Heart right ventricle (tissue), 16 donors: ENCODE measurements at regions of chr1 and their contacts with region 1.

Region 1: GRCh38 chr1:205255941-205256780 is 28.4 kb downstream of the TMCC2 start:
- DNase-seq: peak; percentile 90 to 91
- ATAC-seq: peak; percentile 86 to 94 (median 92)
- H3K4me3 ChIP-seq: no peak overlapping the region
- H3K27ac ChIP-seq: peak overlapping the region in 4 of 10 donors; percentile 6 to 45 (median 15)
- H3K4me1 ChIP-seq: peaks cover 28 to 49% (median 40%) of the 10 kb centered on the region in 9 donors
- H3K27me3 ChIP-seq: no peaks in the 10 kb centered on the region
- CTCF ChIP-seq: peak; percentile 92 to 99 (median 95)

Region 2: GRCh38 chr1:204806943-204807687 is 449.0 kb before region 1 on chr1:
- intact Hi-C with region 1: loop called in 1 of 10 experiments (anchors 5 kb)
- DNase-seq: peak; percentile 80 to 85
- ATAC-seq: peak; percentile 93 to 98 (median 96)
- H3K4me3 ChIP-seq: peak overlapping the region in 9 of 10 donors; percentile 16 to 59 (median 51)
- H3K27ac ChIP-seq: no peak overlapping the region
- H3K4me1 ChIP-seq: peaks cover 0 to 13% (median 4%) of the 10 kb centered on the region in 9 donors
- H3K27me3 ChIP-seq: no peaks in the 10 kb centered on the region
- CTCF ChIP-seq: peak; percentile 86 to 99 (median 96)

Region 3: DNA sequence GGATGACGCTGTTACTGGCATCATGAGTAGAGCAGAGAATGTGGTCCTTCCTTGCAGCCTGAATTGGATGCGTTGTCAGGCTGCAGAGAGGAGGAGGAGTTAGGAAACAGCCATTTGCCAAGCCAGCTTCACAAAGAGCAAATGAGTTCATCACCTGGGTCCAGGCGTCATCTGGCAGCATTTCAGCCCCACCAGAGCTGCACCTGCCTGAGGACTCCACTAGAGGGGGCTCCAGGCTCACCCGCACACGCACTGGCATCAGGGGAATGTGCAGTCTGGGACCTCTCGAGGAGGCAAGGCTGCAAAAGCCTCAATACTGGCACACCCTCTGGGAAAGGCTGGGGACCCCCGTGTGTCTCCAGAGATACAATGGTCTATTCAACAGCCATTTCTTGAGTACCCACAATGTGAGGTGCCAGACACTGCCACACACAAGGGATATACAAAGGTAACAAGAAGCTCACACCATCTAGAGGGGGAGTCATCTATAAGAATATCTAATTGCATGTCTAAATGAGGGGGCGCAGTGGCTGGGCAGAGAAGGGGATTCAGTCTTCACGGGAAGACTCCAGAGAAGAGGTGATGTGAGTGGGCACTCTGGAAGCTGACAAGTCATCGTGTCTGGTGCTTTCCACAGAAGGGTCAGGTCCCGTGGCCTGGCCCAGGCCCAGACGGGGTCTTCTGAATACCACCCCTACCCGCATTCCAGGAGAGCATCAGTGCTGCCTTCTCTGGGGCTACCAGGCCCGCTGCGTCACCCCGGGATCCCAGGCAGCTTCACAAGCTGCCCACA is 266.7 kb before region 1 on chr1:
- intact Hi-C with region 1: loop called in 7 of 10 experiments (anchors 1 to 5 kb)
- DNase-seq: peak; percentile 60 to 66
- ATAC-seq: peak; percentile 84 to 90 (median 86)
- H3K4me3 ChIP-seq: no peak overlapping the region
- H3K27ac ChIP-seq: no peak overlapping the region
- H3K4me1 ChIP-seq: peaks cover 0 to 6% (median 4%) of the 10 kb centered on the region in 9 donors
- H3K27me3 ChIP-seq: peaks cover 0 to 7% (median 5%) of the 10 kb centered on the region in 7 donors
- CTCF ChIP-seq: peak; percentile 75 to 95 (median 93)

Region 4: GRCh38 chr1:205121660-205122488 is 134.3 kb before region 1 on chr1 and contains the start of gene RBBP5:
- intact Hi-C with region 1: loop called in 4 of 10 experiments (anchors 1 to 5 kb)
- DNase-seq: peak; percentile 94 to 96
- ATAC-seq: peak; percentile 98 to 99 (median 99)
- H3K4me3 ChIP-seq: peak within 1 kb of the TSS; percentile 62 to 95 (median 86)
- H3K27ac ChIP-seq: peak within 1 kb of the TSS; percentile 88 to 98 (median 94)
- H3K4me1 ChIP-seq: peaks cover 10 to 35% (median 29%) of the 10 kb centered on the region in 9 donors
- H3K27me3 ChIP-seq: no peaks in the 10 kb centered on the region
- CTCF ChIP-seq: peak; percentile 47 to 92 (median 64)
- total RNA-seq, gene RBBP5: 8.2 to 12.4 (median 9.1) TPM

Region 5: DNA sequence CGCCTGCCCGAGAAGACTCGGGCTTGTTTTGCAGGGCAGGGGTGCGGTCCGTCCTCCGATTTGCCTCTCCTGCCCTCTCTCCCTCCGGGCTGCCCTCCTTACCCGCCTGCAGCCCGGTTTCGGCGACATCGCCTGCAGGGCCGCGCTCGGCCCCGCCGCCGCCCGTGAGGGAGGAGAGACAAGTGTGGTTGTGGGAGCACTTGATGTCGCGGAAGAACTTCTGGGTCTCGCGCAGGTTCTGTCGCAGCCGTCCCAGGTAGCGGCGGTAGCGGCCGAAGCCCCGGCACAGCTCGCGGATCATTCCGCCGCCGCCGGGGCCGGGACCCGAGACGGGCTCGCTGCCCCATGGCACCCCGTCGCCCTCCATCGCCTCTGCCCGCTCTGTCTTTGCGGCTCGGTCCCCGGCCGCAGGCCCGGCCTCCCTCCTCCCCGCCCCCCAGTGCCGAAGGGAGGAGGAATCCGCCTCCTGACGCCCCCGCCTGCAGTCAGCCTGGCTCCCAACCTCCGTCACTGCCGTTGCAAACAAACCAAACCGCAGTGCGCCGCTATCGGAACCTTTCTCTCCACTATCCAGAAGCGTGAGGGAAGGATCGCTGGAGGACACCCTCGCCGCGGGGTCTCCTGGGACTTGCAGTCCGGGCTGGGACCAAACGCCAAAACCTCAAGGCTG is 44.9 kb before region 1 on chr1 and contains the start of gene DSTYK:
- intact Hi-C with region 1: loop called in 1 of 10 experiments (anchors 5 kb)
- DNase-seq: peak; percentile 91 to 95
- ATAC-seq: peak; percentile 97 to 99 (median 98)
- H3K4me3 ChIP-seq: peak within 1 kb of the TSS; percentile 80 to 99 (median 92)
- H3K27ac ChIP-seq: peak within 1 kb of the TSS; percentile 85 to 95 (median 91)
- H3K4me1 ChIP-seq: peaks cover 4 to 37% (median 14%) of the 10 kb centered on the region in 9 donors
- H3K27me3 ChIP-seq: no peaks in the 10 kb centered on the region
- CTCF ChIP-seq: peak in 2 of 9 donors; percentile 20 to 22
- total RNA-seq, gene DSTYK: 5.7 to 9.5 (median 8.0) TPM

Region 6: DNA sequence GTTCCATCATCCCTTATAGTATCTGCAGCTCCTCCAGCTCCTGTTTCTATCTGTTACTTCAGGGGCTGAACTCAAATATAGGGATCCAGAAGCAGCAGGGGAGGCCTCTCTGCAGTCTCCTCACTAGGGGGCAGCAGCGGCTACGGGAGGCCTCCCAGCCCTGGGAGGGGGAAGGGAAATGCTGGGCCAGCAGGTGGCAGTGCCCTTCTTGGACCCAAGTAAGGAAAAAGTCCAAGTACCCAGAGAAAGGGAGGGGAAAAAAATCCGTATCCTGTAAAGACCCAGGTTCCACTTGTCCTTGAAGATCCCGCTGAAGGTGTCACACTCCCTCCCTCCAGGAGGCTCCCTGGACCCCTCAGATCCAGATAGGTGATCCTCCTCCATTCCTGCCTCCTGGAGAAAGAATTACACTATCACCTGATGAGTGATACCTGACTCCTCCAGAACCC is 79.5 kb after region 1 on chr1:
- intact Hi-C with region 1: no loop called
- DNase-seq: peak; percentile 69 to 70
- ATAC-seq: peak; percentile 46 to 85 (median 77)
- H3K4me3 ChIP-seq: no peak overlapping the region
- H3K27ac ChIP-seq: no peak overlapping the region
- H3K4me1 ChIP-seq: no peaks in the 10 kb centered on the region
- H3K27me3 ChIP-seq: peaks cover 0 to 4% (median 0%) of the 10 kb centered on the region in 7 donors
- CTCF ChIP-seq: peak; percentile 33 to 95 (median 84)

Region 7: DNA sequence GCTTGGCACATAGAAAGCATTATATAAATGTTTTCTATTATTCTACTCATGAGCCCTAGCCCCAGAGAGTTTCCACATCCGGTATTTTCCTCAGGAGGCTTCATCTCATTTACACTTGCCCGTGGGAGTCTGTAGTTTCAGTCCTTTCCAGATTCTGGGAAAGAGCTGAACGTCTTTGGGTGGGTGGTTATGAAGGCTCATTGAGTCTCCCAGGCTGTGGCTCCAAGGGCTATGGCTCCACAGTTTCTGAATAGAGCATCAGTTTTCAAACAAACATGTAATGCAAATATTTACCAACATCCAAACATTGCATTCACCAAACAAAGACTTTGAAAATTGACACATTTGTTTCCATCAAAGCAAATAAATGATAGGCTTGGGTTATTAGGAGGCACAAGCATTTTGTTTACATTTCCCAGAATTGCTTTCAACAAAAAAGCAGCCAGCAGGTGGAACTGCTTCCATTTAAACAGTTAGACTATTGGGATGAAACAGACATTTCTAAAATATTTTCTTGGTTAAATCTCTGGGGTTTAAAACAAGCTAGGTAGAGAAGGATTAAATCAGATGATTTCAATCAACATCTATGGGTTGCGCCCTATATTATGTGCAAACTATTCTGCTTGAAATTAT is 166.9 kb after region 1 on chr1:
- intact Hi-C with region 1: no loop called
- DNase-seq: no peak
- ATAC-seq: no peak
- H3K4me3 ChIP-seq: no peak overlapping the region
- H3K27ac ChIP-seq: no peak overlapping the region
- H3K4me1 ChIP-seq: peaks cover 0 to 33% (median 4%) of the 10 kb centered on the region in 9 donors
- H3K27me3 ChIP-seq: peaks cover 0 to 39% (median 0%) of the 10 kb centered on the region in 7 donors
- CTCF ChIP-seq: peak in 4 of 9 donors; percentile 10 to 41 (median 23)

Region 8: DNA sequence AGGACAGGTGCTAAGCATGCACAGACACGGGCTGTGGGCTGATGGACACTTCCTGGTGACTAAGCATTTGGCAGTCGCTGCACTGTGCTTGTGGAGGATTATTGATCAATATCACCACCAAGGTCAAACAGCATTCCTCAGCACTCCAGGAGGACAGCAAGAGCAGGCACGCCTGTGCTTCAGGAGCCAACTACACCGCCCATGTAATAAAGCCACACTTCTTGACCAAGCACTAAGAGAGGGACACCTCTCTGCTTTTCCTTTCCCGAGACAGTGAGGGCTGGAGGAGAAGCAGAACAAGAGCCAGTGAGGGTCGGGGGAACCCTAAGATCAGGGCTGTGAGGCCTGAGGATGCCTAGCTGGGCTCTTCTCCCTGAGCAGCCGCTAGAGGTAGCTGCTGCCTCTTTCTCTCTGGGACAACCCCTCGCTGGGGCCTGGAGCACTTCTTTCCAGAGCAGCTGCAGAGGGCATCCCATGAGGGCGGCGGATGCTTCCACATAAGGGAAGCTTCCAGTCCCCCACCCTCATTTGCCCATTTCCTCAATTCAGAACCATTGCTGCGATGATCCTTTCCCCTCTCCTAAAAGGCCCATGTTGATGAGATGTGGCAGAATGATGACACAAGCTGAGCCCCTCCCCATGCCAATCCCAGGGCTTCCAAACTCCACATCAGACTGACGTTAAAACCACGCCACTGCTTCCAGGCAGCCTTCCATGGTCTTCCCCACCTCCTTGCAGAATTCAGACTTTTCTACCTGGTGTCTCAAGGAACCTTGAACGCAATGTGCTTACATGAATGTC is 728.0 kb after region 1 on chr1:
- intact Hi-C with region 1: no loop called
- DNase-seq: peak; percentile 64 to 71
- ATAC-seq: peak; percentile 73 to 89 (median 86)
- H3K4me3 ChIP-seq: no peak overlapping the region
- H3K27ac ChIP-seq: no peak overlapping the region
- H3K4me1 ChIP-seq: peaks cover 0 to 48% (median 15%) of the 10 kb centered on the region in 9 donors
- H3K27me3 ChIP-seq: no peaks in the 10 kb centered on the region
- CTCF ChIP-seq: peak; percentile 44 to 85 (median 77)